Calu3 (cell line): ENCODE measurements at regions of chrX and their contacts with region 1.

Region 1: GRCh38 chrX:82320554-82320953 is 1118.7 kb downstream of the SH3BGRL start:
- DNase-seq: no peak
- H3K4me3 Mint-ChIP-seq: no peak overlapping the region
- H3K27ac Mint-ChIP-seq: no peak overlapping the region
- H3K4me1 Mint-ChIP-seq: peaks cover 11% of the 10 kb centered on the region
- H3K27me3 Mint-ChIP-seq: no peaks in the 10 kb centered on the region
- CTCF ChIP-seq: no peak

Region 2: DNA sequence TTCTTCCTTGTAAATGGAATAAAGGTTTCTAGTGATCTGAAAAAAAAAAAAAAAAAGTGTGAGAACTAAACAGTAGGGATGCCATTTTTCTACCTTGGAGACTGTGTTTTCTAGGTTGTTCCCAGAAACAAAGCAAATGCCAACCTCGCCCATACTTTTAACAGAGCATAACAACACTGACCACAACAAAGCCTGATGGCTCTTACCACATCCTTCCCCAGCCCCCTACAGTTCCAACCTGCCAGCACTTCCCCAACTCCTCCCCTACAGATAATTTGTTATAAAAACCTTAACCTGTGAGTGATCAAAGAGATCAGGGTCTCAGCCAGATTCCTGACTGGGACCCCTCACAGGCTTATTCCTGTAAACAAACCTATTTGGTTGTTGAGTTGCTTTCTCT is 178.6 kb before region 1 on chrX:
- CTCF ChIA-PET with region 1: no interaction called
- intact Hi-C with region 1: no loop called
- DNase-seq: no peak
- H3K4me3 Mint-ChIP-seq: no peak overlapping the region
- H3K27ac Mint-ChIP-seq: no peak overlapping the region
- H3K4me1 Mint-ChIP-seq: no peaks in the 10 kb centered on the region
- H3K27me3 Mint-ChIP-seq: no peaks in the 10 kb centered on the region
- CTCF ChIP-seq: no peak

Region 3: DNA sequence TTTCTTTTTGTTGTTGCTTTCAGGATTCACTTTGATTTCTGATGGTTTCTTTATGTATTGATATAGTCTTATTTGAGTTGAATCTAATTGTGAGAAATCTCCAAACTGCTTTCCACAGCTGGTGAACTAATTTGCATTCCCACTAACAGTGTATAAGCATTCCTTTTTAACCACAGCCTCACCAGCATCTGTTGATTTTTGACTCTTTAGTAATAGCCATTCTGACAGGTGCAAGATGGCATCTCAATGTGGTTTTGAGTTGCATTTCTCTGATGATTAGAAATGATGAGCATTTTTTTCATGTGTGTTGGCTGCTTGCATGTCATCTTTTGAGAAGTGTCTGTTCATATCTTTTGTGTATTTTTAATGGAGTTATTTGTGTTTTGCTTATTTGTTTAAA is 95.6 kb before region 1 on chrX:
- CTCF ChIA-PET with region 1: no interaction called
- intact Hi-C with region 1: loop called (anchors 5 kb)
- DNase-seq: no peak
- H3K4me3 Mint-ChIP-seq: no peak overlapping the region
- H3K27ac Mint-ChIP-seq: no peak overlapping the region
- H3K4me1 Mint-ChIP-seq: no peaks in the 10 kb centered on the region
- H3K27me3 Mint-ChIP-seq: no peaks in the 10 kb centered on the region
- CTCF ChIP-seq: no peak